AG04450 (cell line): ENCODE measurements at regions of chr6 and their contacts with region 1.

Region 1: GRCh38 chr6:159789377-159790148 is at the start of gene TCP1:
- DNase-seq: peak; percentile 98
- H3K4me3 ChIP-seq: peak within 1 kb of the TSS; percentile 98
- H3K27ac ChIP-seq: peak within 1 kb of the TSS; percentile 83
- H3K27me3 ChIP-seq: no peaks in the 10 kb centered on the region
- CTCF ChIP-seq: no peak
- polyA plus RNA-seq, gene TCP1: 132 and 182 TPM in 2 replicates

Region 2: GRCh38 chr6:159602431-159603041 is 187.0 kb before region 1 on chr6:
- CTCF ChIA-PET with region 1: no interaction called
- POLR2A ChIA-PET with region 1: no interaction called
- DNase-seq: no peak
- H3K4me3 ChIP-seq: no peak overlapping the region
- H3K27ac ChIP-seq: no peak overlapping the region
- H3K27me3 ChIP-seq: peaks cover 4% of the 10 kb centered on the region
- CTCF ChIP-seq: no peak

Region 3: GRCh38 chr6:159693128-159693893 is 96.3 kb before region 1 on chr6 and contains the start of gene SOD2:
- CTCF ChIA-PET with region 1: interaction called, 16 read pairs
- POLR2A ChIA-PET with region 1: interaction called, 31 read pairs
- DNase-seq: peak; percentile 58
- H3K4me3 ChIP-seq: peak within 1 kb of the TSS; percentile 94
- H3K27ac ChIP-seq: peak within 1 kb of the TSS; percentile 78
- H3K27me3 ChIP-seq: no peaks in the 10 kb centered on the region
- CTCF ChIP-seq: no peak
- polyA plus RNA-seq, gene SOD2: 126 and 194 TPM in 2 replicates

Region 4: DNA sequence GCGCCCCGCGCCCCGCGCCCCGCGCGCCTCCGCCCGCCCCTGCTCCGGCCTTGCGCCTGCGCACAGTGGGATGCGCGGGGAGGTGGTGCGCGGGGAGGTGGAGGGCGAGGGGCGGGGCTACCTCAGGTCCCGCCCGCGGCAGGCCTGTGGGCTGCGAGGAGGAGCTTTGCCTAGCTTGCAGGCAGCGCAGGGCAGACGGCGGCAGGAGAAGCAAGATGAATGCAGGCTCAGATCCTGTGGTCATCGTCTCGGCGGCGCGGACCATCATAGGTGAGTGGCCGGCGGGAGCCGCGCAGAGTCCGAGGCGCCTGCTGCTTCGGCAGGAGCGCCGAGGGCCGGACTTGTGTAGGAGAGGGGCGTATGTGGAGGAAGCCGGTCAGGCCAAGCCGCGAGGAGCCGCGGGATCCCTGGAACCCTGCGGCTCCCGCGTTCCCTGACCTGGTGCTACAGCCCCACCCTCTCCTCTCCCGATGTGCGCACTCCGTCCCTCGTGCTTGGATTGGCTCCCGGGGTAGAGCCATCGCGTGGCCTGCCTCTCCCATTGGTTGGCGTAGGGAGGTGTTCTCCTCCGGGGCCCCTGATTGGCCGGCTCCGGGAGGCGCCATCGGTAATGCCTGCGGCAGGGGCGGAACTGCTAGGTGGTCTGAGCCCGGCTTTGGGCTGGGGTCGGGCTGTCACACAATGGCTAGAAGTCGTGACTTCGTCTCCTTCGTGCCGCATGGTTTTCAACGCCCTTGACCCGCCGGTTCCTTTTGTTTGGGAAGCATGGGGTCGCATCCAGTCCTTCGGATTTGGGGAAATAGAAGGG is 27.5 kb before region 1 on chr6 and contains the start of gene ACAT2:
- CTCF ChIA-PET with region 1: interaction called, 3 read pairs
- POLR2A ChIA-PET with region 1: interaction called, 20 read pairs
- DNase-seq: peak; percentile 84
- H3K4me3 ChIP-seq: peak within 1 kb of the TSS; percentile 86
- H3K27ac ChIP-seq: peak within 1 kb of the TSS; percentile 97
- H3K27me3 ChIP-seq: no peaks in the 10 kb centered on the region
- CTCF ChIP-seq: no peak
- polyA plus RNA-seq, gene ACAT2: 36.9 and 39.9 TPM in 2 replicates

Region 5: DNA sequence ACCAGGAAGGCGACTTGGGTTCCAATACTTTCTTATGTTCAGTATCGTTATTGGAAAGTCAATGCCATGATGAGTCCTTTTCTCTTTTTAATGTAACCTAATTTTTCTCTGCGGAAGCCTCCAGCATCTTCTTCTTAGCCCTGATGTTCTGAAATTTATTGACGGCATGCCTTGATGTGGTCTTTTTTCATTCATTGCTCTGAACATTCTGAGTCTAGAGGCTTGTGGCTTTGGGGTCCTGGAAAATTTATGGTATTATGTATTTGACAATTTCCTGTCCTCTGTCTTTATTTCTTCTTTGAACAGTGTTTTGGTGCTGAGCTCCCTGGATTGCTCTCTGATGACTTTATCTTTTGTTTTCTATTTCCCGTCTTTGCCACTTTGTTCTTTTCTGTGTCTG is 72.5 kb after region 1 on chr6:
- CTCF ChIA-PET with region 1: no interaction called
- POLR2A ChIA-PET with region 1: no interaction called
- DNase-seq: no peak
- H3K4me3 ChIP-seq: no peak overlapping the region
- H3K27ac ChIP-seq: no peak overlapping the region
- H3K27me3 ChIP-seq: no peaks in the 10 kb centered on the region
- CTCF ChIP-seq: no peak